Activated T-helper 1 cell treated with anti-CD3 and anti-CD28 coated beads, Interleukin-12 subunit alpha, Interleukin-12 subunit beta, Interleukin-2, Interleukin-4 antibody, amounts not matched to agents 30 ng/mL and 10 ng/mL and 1 ng/mL, durations not matched to agents 14 hours and 24 hours and 36 hours (primary cell): ENCODE measurements at regions of chr11 and their contacts with region 1.

Region 1: GRCh38 chr11:13335319-13335718 is 57.7 kb downstream of the BMAL1 start:
- DNase-seq: peak; percentile 58
- H3K4me3 Mint-ChIP-seq: no peak overlapping the region
- H3K27ac Mint-ChIP-seq: peak overlapping the region; percentile 25
- H3K4me1 Mint-ChIP-seq: peaks cover 56% of the 10 kb centered on the region
- H3K27me3 Mint-ChIP-seq: no peaks in the 10 kb centered on the region

Region 2: GRCh38 chr11:13276832-13277767 is 58.2 kb before region 1 on chr11:
- intact Hi-C with region 1: loop called (anchors 1 kb)
- DNase-seq: peak; percentile 98
- H3K4me3 Mint-ChIP-seq: peak overlapping the region; percentile 98
- H3K27ac Mint-ChIP-seq: peak overlapping the region; percentile 80
- H3K4me1 Mint-ChIP-seq: peaks cover 52% of the 10 kb centered on the region
- H3K27me3 Mint-ChIP-seq: peaks cover 46% of the 10 kb centered on the region

Region 3: GRCh38 chr11:13289081-13289480 is 46.2 kb before region 1 on chr11:
- intact Hi-C with region 1: loop called (anchors 1 kb)
- DNase-seq: no peak
- H3K4me3 Mint-ChIP-seq: no peak overlapping the region
- H3K27ac Mint-ChIP-seq: peak overlapping the region; percentile 84
- H3K4me1 Mint-ChIP-seq: peaks cover 84% of the 10 kb centered on the region
- H3K27me3 Mint-ChIP-seq: no peaks in the 10 kb centered on the region

Region 4: DNA sequence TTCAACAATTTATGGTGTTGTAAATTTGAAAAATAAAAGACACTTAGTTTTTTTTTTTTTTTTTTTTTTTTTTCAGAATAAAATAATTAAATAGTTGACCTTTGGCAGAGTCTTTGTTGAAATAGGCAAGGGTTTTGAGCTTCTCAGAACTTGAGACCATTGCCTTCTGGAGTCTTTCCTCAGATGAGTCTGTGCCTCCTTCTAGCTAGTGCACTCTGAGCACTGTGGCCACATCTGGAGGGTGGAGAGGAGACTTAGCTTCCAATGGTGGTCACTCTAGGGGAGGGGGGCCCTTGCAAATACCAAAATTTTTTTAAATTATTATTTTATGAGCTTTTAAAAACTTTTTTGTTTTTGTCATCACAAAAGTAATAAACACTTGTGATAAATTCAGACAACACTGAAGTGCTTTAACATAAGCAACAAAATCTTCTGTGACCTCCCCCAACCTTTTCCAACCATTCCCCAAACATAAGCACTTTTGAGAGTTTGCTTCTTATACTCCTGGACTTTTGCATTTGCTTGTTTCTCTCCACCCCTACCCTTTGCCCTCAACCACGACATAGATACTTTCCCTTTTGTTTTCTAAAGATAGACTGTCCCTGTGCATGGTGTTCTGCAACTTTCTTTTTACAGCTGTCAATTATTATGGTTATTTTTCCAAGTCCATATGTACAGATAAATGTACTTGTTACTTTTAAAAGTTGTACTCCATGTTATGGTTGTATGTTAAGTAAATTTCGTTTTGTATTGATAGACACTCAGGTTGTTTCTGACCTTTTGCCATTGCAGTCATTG is 16.6 kb before region 1 on chr11:
- intact Hi-C with region 1: loop called (anchors 2 kb)
- DNase-seq: no peak
- H3K4me3 Mint-ChIP-seq: peak overlapping the region; percentile 39
- H3K27ac Mint-ChIP-seq: peak overlapping the region; percentile 45
- H3K4me1 Mint-ChIP-seq: peaks cover 57% of the 10 kb centered on the region
- H3K27me3 Mint-ChIP-seq: no peaks in the 10 kb centered on the region

Region 5: GRCh38 chr11:13668102-13668956 is 333.0 kb after region 1 on chr11 and contains the start of gene FAR1:
- intact Hi-C with region 1: loop called (anchors 2 kb)
- DNase-seq: peak; percentile 97
- H3K4me3 Mint-ChIP-seq: peak within 1 kb of the TSS; percentile 98
- H3K27ac Mint-ChIP-seq: peak within 1 kb of the TSS; percentile 99
- H3K4me1 Mint-ChIP-seq: peaks cover 42% of the 10 kb centered on the region
- H3K27me3 Mint-ChIP-seq: peaks cover 17% of the 10 kb centered on the region
- total RNA-seq, gene FAR1: 67.3 and 67.4 TPM in 2 replicates

Region 6: GRCh38 chr11:15113381-15113780 is 1778.1 kb after region 1 on chr11:
- intact Hi-C with region 1: loop called (anchors 5 kb)
- DNase-seq: no peak
- H3K4me3 Mint-ChIP-seq: peak overlapping the region; percentile 48
- H3K27ac Mint-ChIP-seq: peak overlapping the region; percentile 15
- H3K4me1 Mint-ChIP-seq: peaks cover 49% of the 10 kb centered on the region
- H3K27me3 Mint-ChIP-seq: peaks cover 10% of the 10 kb centered on the region